Adrenal gland (tissue), 19 donors: ENCODE measurements at regions of chr11 and their contacts with region 1.

Region 1: GRCh38 chr11:62787005-62787759 is at the start of gene TMEM179B:
- DNase-seq: peak; percentile 98 to 99 (median 99)
- H3K4me3 ChIP-seq: peak within 1 kb of the TSS; percentile 63 to 96 (median 86)
- H3K27ac ChIP-seq: peak within 1 kb of the TSS; percentile 87 to 99 (median 99)
- H3K4me1 ChIP-seq: peaks cover 32 to 39% of the 10 kb centered on the region in 2 donors
- H3K27me3 ChIP-seq: no peaks in the 10 kb centered on the region
- CTCF ChIP-seq: peak in 3 of 6 experiments; percentile 7 to 62 (median 46)
- POLR2A ChIP-seq: peak; percentile 83 to 98
- total RNA-seq, gene TMEM179B: 55.4 to 217 (median 72.6) TPM

Region 2: DNA sequence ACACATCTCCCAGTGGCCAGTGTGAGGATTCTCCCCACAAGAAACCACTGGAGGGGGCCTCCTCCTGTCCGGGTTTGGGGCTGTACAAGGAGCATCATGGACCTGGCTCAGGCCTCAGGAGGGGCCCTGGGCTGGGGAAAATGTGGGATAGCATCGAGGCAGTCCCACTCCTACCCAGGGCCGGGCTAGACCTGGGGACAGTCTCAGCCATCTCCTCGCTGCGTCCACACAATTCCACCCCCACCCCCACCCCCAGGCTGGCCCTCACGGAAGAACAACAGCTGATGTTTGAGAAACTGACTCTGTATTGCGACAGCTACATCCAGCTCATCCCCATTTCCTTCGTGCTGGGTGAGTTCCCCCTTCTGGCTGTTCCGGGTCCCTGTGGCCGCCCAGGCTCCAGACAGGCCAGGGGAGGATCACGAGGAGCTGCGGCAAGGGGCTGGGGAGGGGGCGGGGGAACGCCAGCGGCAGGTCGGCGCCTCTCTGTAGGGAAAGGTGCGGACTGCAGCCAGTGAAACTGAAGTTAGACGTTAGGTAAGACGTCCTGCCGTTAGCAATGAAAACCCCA is 832.2 kb before region 1 on chr11:
- intact Hi-C with region 1: no loop called
- DNase-seq: peak; percentile 46 to 78 (median 62)
- H3K4me3 ChIP-seq: peak overlapping the region in 2 of 4 donors; percentile 11 to 50
- H3K27ac ChIP-seq: peak overlapping the region in 4 of 5 donors; percentile 26 to 88 (median 64)
- H3K4me1 ChIP-seq: peaks cover 5 to 10% of the 10 kb centered on the region in 2 donors
- H3K27me3 ChIP-seq: no peaks in the 10 kb centered on the region
- CTCF ChIP-seq: peak in 2 of 6 experiments; percentile 15 to 29
- POLR2A ChIP-seq: no peak

Region 3: GRCh38 chr11:62831520-62832335 is 44.5 kb after region 1 on chr11 and contains the start of gene STX5:
- intact Hi-C with region 1: loop called in 1 of 2 experiments (anchors 5 kb)
- DNase-seq: peak; percentile 99 to 100 (median 100)
- H3K4me3 ChIP-seq: peak within 1 kb of the TSS; percentile 34 to 93 (median 88)
- H3K27ac ChIP-seq: peak within 1 kb of the TSS; percentile 83 to 98 (median 96)
- H3K4me1 ChIP-seq: peaks cover 14 to 23% of the 10 kb centered on the region in 2 donors
- H3K27me3 ChIP-seq: no peaks in the 10 kb centered on the region
- CTCF ChIP-seq: no peak
- POLR2A ChIP-seq: peak; percentile 49 to 96
- total RNA-seq, gene STX5: 22.2 to 59.9 (median 37.3) TPM

Region 4: GRCh38 chr11:62842185-62842741 is 55.1 kb after region 1 on chr11:
- intact Hi-C with region 1: no loop called
- DNase-seq: peak; percentile 18 to 77 (median 39)
- H3K4me3 ChIP-seq: peak overlapping the region in 2 of 4 donors; percentile 23 to 55
- H3K27ac ChIP-seq: peak overlapping the region; percentile 91 to 99 (median 98)
- H3K4me1 ChIP-seq: peaks cover 12 to 18% of the 10 kb centered on the region in 2 donors
- H3K27me3 ChIP-seq: no peaks in the 10 kb centered on the region
- CTCF ChIP-seq: no peak
- POLR2A ChIP-seq: no peak

Region 5: DNA sequence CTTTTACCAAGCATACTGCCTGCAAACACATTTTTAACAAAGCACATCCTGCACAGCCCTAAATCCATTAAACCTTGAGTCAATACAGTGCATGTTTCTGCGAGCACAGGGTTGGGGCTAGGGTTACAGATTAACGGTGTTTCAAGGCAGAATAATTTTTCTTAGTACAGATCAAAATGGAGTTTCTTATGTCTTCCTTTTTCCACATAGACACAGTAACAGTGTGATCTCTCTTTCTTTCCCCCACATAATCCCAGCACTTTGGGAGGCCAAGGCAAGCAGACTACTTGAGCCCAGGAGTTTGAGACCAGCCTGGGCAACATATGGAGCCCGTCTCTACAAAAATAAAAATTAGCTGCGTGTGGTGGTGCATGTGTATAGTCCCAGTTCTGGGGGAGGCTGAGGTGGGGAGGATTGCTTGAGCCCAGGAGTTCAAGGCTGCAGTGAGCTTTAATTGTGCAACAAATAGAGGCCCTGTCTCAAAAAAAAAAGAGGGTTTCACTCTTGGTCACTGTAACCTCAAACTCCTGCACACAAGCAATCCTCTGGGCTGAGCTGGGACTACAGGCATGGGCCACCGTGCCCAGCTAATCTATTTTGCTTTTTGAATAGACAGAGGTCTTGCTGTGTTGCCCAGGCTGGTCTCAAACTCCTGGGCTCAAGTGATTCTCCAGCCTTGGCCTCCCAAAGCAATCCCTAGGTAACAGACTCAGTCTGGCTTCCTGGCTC is 73.8 kb after region 1 on chr11:
- intact Hi-C with region 1: loop called (anchors 5 to 10 kb)
- DNase-seq: no peak
- H3K4me3 ChIP-seq: no peak overlapping the region
- H3K27ac ChIP-seq: no peak overlapping the region
- H3K4me1 ChIP-seq: peaks cover 3 to 4% of the 10 kb centered on the region in 2 donors
- H3K27me3 ChIP-seq: no peaks in the 10 kb centered on the region
- CTCF ChIP-seq: no peak
- POLR2A ChIP-seq: no peak

Region 6: GRCh38 chr11:63362196-63362793 is 575.1 kb after region 1 on chr11:
- intact Hi-C with region 1: no loop called
- DNase-seq: no peak
- H3K4me3 ChIP-seq: no peak overlapping the region
- H3K27ac ChIP-seq: no peak overlapping the region
- H3K4me1 ChIP-seq: no peaks in the 10 kb centered on the region
- H3K27me3 ChIP-seq: peaks cover 12% of the 10 kb centered on the region
- CTCF ChIP-seq: no peak
- POLR2A ChIP-seq: no peak

Region 7: GRCh38 chr11:63448646-63449045 is 661.5 kb after region 1 on chr11:
- intact Hi-C with region 1: no loop called
- DNase-seq: no peak
- H3K4me3 ChIP-seq: no peak overlapping the region
- H3K27ac ChIP-seq: no peak overlapping the region
- H3K4me1 ChIP-seq: no peaks in the 10 kb centered on the region
- H3K27me3 ChIP-seq: no peaks in the 10 kb centered on the region
- CTCF ChIP-seq: no peak
- POLR2A ChIP-seq: no peak